Naive thymus-derived CD8-positive, alpha-beta T cell (primary cell): ENCODE measurements at regions of chr17 and their contacts with region 1.

Region 1: DNA sequence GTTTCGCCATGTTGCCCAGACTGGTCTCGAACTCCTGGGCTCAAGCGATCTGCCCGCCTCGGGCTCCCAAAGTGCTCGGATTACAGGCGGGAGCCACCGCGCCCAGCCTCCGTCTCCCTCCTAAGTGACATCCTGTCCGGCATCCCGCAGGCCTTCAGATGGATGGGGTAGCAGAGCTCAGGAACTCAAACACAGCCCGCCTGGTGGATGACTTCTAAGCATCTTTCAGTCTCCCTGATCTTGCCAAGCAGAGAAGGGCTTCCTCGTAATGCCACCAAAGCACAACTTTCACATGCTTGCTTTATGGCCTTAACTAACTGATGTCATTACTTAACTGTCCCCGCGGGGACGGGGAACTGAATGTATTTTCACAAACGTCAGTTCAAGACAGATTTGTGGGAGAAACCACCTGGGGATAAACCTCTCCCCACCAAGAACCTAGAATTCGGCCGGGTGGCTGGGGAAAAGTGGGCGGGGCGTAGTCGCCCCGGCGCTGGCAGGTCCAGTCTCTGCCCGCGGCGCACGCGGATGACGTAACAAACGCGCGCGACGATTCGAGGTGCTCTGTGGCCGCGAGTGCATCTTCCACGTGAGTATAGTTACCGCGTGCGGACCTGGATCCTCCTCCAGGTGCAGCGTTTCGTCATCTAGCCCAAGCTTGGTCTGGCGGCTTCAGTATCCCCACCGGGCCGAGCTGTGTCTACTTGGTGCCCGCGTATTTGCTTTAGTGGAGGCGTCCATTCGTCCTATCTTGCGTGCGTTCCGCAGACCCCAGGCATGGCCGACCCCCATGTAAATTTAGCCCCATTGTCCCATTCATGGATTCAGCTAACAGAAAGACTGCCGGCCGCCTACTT is at the start of gene PFAS:
- DNase-seq: peak; percentile 91 to 97 (median 95)
- ATAC-seq: peak; percentile 43 to 60
- H3K4me3 Mint-ChIP-seq: peak within 1 kb of the TSS; percentile 95 to 100 (median 100)
- H3K27ac Mint-ChIP-seq: peak within 1 kb of the TSS; percentile 99 to 100 (median 100)
- H3K4me1 Mint-ChIP-seq: peaks cover 32 to 56% (median 49%) of the 10 kb centered on the region in 4 donors
- H3K27me3 Mint-ChIP-seq: no peaks in the 10 kb centered on the region
- polyA plus RNA-seq, gene PFAS: 10.1 to 20.9 (median 19.8) TPM

Region 2: GRCh38 chr17:8118769-8119580 is 130.0 kb before region 1 on chr17:
- POLR2A ChIA-PET with region 1: interaction called, 31 read pairs
- DNase-seq: peak; percentile 78 to 98 (median 85)
- ATAC-seq: peak; percentile 64 to 71
- H3K4me3 Mint-ChIP-seq: peak overlapping the region; percentile 92 to 98 (median 94)
- H3K27ac Mint-ChIP-seq: peak overlapping the region; percentile 91 to 100 (median 97)
- H3K4me1 Mint-ChIP-seq: peaks cover 46 to 61% (median 56%) of the 10 kb centered on the region in 4 donors
- H3K27me3 Mint-ChIP-seq: peaks cover 15 to 55% (median 38%) of the 10 kb centered on the region in 5 donors

Region 3: GRCh38 chr17:8131844-8132441 is 117.0 kb before region 1 on chr17:
- POLR2A ChIA-PET with region 1: no interaction called
- DNase-seq: no peak
- ATAC-seq: no peak
- H3K4me3 Mint-ChIP-seq: no peak overlapping the region
- H3K27ac Mint-ChIP-seq: peak overlapping the region in 1 of 10 donors; percentile 74
- H3K4me1 Mint-ChIP-seq: peaks cover 4 to 5% (median 4%) of the 10 kb centered on the region in 4 donors
- H3K27me3 Mint-ChIP-seq: peaks cover 0 to 11% (median 0%) of the 10 kb centered on the region in 5 donors

Region 4: DNA sequence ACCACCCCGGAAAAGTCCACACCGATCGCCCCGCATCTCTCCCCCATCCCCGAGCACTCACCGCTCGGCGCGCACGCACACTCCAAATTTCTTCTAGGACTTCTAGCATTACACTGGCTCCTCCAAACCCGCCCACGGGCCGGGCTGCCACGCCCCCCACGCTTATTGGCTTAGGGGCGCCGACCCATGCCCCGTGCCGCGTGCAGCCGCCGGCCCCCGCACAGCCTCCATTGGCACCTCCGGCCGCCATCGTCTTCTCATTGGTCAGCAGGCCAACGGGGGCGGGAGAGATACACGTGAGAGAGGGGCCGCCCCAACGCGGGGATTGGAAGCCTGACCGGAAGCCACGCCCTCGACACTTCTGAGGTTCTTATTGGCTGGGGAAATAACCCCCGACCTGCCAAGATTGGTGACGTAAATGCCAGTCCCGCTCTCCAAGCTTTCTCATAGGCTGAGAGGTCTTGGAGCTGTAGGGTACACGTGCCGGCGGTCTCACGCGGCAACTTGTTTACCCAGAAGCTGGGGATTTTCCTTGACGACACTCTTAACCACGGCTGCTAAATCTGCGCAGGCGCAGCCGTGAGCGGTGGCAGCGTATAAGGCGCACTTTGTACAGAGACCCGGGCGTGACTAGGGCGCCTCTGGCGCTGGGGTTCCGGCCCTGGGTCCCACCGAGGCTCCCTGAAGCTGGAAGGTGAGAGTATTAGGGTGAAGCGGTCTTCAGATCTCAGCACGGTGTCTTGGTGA is 92.6 kb before region 1 on chr17:
- POLR2A ChIA-PET with region 1: interaction called, 28 read pairs
- DNase-seq: peak; percentile 97 to 100 (median 100)
- ATAC-seq: peak; percentile 67 to 71
- H3K4me3 Mint-ChIP-seq: no peak overlapping the region
- H3K27ac Mint-ChIP-seq: no peak overlapping the region
- H3K4me1 Mint-ChIP-seq: peaks cover 31 to 70% (median 54%) of the 10 kb centered on the region in 4 donors
- H3K27me3 Mint-ChIP-seq: peaks cover 0 to 2% (median 0%) of the 10 kb centered on the region in 5 donors

Region 5: DNA sequence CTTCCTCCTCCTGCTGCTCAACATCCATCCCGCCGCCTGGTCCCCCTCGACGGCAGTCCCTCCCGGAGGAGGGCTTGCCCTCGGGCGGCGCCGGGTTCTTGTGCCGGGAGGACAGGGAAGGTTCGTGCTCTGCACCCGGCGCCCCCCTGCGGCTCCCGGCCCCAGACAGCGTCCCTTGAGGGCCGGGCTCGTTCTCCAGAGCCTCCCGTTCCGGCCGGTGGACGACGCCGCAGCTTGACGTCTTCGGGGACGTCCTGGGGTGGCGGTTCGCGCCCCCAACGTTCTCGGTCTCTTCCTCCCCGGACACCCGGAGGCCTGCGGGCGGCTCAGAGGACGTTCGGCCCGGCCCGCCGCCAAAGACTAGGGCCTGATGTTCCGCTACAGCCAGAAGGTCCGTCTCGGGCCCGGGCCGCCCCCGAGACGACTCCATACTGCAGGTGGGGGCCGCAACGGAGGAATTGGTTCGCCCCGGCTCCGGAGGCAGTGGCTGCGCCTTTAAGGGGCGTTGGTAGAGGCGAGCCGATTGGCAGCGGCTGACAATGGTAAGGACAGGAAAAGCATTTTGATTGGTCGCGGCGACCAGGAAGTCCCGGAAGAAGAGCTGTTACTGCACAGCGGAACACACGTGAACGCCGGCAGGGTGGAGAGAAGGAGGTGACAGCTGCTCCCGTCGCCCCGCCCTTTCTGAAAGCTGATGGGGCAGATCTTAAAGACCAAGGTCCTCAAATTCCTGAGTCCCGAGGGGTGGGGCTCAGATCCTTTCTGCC is 59.1 kb before region 1 on chr17 and contains the start of gene BORCS6:
- POLR2A ChIA-PET with region 1: interaction called, 95 read pairs
- DNase-seq: peak; percentile 83 to 98 (median 94)
- ATAC-seq: peak; percentile 67 to 71
- H3K4me3 Mint-ChIP-seq: peak within 1 kb of the TSS in 3 of 10 donors; percentile 3 to 51 (median 39)
- H3K27ac Mint-ChIP-seq: peak within 1 kb of the TSS in 8 of 10 donors; percentile 69 to 94 (median 92)
- H3K4me1 Mint-ChIP-seq: peaks cover 6 to 13% (median 12%) of the 10 kb centered on the region in 4 donors
- H3K27me3 Mint-ChIP-seq: no peaks in the 10 kb centered on the region
- polyA plus RNA-seq, gene BORCS6: 16.1 to 22.6 (median 16.9) TPM

Region 6: DNA sequence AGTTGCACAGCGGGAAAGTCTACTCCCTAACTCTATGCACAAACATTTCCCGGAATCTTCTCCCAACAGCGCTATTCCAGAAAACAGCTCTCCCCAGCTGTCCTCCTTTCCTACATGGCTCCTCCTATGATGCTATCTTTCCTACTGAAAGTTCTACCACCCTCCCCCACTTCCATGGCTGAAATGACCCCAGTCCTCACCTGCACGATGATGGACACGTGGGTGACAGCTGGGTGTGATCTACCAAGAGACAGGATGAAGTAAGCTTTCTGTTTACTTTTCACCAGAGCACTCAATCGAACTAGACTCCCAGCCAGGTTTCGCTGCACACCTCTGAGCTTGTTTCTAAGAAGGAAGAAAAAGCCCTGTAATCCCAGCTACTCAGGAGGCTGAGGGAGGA is 11.8 kb before region 1 on chr17:
- POLR2A ChIA-PET with region 1: interaction called, 437 read pairs
- DNase-seq: no peak
- ATAC-seq: no peak
- H3K4me3 Mint-ChIP-seq: no peak overlapping the region
- H3K27ac Mint-ChIP-seq: peak overlapping the region in 4 of 10 donors; percentile 1 to 73 (median 49)
- H3K4me1 Mint-ChIP-seq: peaks cover 11 to 47% (median 26%) of the 10 kb centered on the region in 4 donors
- H3K27me3 Mint-ChIP-seq: no peaks in the 10 kb centered on the region

Region 7: GRCh38 chr17:8294814-8295316 is 45.9 kb after region 1 on chr17:
- POLR2A ChIA-PET with region 1: interaction called, 67 read pairs
- DNase-seq: no peak
- ATAC-seq: no peak
- H3K4me3 Mint-ChIP-seq: peak overlapping the region; percentile 88 to 97 (median 94)
- H3K27ac Mint-ChIP-seq: peak overlapping the region; percentile 84 to 97 (median 95)
- H3K4me1 Mint-ChIP-seq: peaks cover 20 to 39% (median 31%) of the 10 kb centered on the region in 4 donors
- H3K27me3 Mint-ChIP-seq: no peaks in the 10 kb centered on the region

Region 8: GRCh38 chr17:8311131-8311790 is 62.3 kb after region 1 on chr17:
- POLR2A ChIA-PET with region 1: no interaction called
- DNase-seq: no peak
- ATAC-seq: no peak
- H3K4me3 Mint-ChIP-seq: no peak overlapping the region
- H3K27ac Mint-ChIP-seq: peak overlapping the region in 1 of 10 donors; percentile 58
- H3K4me1 Mint-ChIP-seq: peaks cover 0 to 4% (median under 1%) of the 10 kb centered on the region in 4 donors
- H3K27me3 Mint-ChIP-seq: peaks cover 2 to 47% (median 12%) of the 10 kb centered on the region in 5 donors

Region 9: DNA sequence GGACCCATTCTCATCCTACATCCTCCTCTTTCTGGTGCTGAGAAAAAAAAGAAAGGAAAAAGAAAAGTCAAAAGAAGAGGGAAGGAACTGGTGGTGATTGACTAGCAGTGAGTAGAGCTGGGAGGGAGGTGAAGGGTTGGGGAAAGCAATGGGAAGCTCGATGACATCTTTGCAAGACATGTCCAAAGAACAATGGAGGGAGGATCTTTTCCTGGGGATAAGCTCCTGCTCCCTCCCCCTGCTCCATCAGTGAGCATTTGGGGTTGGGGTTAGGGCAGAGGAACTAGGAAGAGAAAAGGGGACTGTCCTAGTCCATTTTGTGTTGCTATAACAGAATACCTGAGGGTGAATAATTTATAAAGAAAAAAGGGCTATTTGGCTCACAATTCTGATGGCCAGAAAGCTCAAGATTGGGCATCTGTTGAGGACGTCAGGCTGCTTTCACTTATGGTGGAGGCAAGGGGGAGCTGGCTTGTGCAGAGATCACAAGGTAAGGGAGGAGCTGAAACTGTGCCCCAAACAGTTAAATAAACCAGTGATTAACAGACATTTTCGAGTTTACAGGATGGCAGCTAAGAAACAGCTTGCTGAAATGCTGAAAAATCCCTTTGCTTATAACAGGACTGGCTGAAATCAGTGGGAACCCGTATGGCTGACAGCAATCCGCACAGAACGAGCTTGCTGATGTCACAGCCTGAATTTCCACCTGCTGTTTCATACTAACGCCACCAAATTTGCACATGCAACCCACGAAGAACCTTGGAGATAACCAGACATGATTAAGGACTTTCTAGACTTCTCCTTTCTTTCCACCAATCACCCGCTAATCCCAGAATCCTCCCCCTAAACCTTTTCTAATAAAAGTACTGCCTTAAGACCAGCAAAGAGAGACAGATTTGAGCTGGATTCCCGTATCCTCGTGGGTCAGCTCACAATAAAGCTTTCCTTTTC is 89.1 kb after region 1 on chr17:
- POLR2A ChIA-PET with region 1: no interaction called
- DNase-seq: peak in 1 of 10 donors; percentile 9
- ATAC-seq: peak in 1 of 2 donors; percentile 46
- H3K4me3 Mint-ChIP-seq: peak overlapping the region in 6 of 10 donors; percentile 4 to 42 (median 22)
- H3K27ac Mint-ChIP-seq: peak overlapping the region in 3 of 10 donors; percentile 17 to 76 (median 45)
- H3K4me1 Mint-ChIP-seq: peaks cover 7 to 11% (median 9%) of the 10 kb centered on the region in 4 donors
- H3K27me3 Mint-ChIP-seq: peaks cover 1 to 14% (median 4%) of the 10 kb centered on the region in 5 donors